Ascending aorta (tissue), 2 donors: ENCODE measurements at regions of chr16 and their contacts with region 1.

Region 1: GRCh38 chr16:81723098-81723723 is 55.9 kb upstream of the PLCG2 start:
- DNase-seq: no peak
- H3K4me3 ChIP-seq: no peak overlapping the region
- H3K27ac ChIP-seq: no peak overlapping the region
- H3K4me1 ChIP-seq: no peaks in the 10 kb centered on the region
- H3K27me3 ChIP-seq: no peaks in the 10 kb centered on the region
- CTCF ChIP-seq: peak; percentile 51 to 74 (median 72)

Region 2: DNA sequence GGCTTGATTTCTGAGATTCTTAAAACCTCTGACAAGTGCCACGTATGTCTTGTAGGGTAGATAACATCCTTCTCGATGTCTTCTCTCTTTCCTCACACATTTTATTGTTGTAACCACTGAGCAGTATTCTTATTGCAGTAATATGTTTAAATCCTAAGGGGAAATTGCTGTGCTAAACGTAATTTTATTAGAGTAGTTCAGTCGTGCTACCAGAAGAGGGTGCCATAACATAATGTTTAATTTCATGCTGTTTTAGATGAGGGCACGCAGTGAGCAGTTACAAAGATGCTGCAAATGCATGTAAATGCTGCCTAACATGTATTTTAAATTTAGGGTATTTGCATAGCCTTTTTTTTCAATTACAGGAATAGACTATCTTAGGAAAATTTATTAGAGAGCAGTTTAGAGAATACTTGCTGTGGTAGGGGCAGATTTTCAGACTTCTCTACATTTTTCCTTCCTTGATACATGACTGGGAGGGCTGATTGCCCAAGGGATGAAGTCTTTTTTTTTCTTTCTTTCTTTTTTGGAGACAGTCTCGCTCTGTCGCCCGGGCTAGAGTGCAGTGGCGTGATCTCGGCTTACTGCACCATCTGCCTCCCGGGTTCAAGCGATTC is 356.8 kb before region 1 on chr16:
- intact Hi-C with region 1: loop called (anchors 2 kb)
- DNase-seq: no peak
- H3K4me3 ChIP-seq: no peak overlapping the region
- H3K27ac ChIP-seq: no peak overlapping the region
- H3K4me1 ChIP-seq: no peaks in the 10 kb centered on the region
- H3K27me3 ChIP-seq: no peaks in the 10 kb centered on the region
- CTCF ChIP-seq: peak; percentile 45 to 65 (median 55)

Region 3: DNA sequence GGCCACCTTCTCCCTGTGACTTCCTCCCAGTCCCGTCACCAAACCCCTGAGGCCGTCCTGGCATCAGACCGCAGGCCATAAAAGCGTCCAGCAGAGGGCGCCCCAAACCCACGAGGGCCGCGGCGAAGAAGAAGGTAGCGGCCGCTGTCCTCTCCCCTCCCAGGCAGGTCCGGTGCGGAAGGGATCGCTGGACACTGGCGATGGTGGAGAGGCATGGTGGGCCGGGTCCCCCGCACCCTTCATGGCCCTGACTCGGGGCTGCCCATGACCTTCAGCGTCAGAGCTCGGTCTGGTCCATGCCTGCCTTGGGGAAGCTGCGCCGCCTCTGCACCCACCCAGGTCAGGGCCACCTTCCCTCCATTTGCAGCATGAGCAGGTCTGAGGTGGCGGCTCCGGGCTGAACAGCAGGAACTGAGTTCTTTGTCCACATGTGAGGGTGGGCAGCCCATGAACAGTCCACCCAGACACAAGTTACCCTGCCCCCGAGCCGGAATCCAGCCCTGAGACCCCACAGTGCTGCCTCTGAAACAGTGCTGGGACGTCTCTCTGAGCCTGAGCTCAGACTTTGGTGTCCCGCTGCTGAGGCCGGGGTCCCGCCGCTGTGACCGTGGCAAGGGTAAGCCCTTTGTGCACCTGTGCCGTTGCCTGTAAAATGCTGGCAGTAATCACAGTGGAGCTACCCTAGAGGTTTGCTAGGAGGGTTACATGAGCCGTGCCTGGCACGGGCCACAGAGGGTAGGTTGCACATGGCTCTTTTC is 319.4 kb before region 1 on chr16:
- intact Hi-C with region 1: loop called (anchors 1 kb)
- DNase-seq: peak; percentile 26 to 90
- H3K4me3 ChIP-seq: peak overlapping the region; percentile 17 to 40
- H3K27ac ChIP-seq: no peak overlapping the region
- H3K4me1 ChIP-seq: peaks cover 0 to 4% of the 10 kb centered on the region in 2 donors
- H3K27me3 ChIP-seq: no peaks in the 10 kb centered on the region
- CTCF ChIP-seq: peak; percentile 92 to 98 (median 93)